ENCODE measurements at regions of chr4 and their contacts with region 1.

Region 1: DNA sequence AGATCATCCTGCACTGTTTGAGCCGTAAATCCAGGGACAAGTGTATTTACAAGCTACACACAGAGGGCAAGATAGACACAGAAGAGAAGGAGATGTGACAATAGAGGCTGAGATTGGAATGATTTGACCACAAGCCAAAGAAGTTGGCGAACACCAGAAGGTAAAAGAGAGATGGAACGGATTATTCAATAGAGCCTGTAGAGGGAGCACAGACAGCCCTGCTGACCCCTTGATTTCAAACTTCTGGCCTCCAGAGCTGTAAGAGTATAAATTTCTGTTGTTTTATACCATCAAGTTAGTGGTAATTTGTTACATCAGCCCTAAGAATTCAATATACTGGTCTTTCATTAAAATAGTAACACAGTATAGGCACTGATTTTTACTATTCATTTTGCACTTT is 447.8 kb downstream of the FAT4 start:
- DNase-seq: no peak
- H3K4me3 ChIP-seq: no peak overlapping the region
- H3K27ac ChIP-seq: no peak overlapping the region
- H3K4me1 ChIP-seq: no peaks in the 10 kb centered on the region
- H3K27me3 ChIP-seq: no peaks in the 10 kb centered on the region
- CTCF ChIP-seq: no peak
- EP300 ChIP-seq: no peak
- POLR2A ChIP-seq: no peak

Region 2: GRCh38 chr4:126827669-126828068 is 1065.1 kb after region 1 on chr4:
- in situ Hi-C with region 1: no loop called
- intact Hi-C with region 1: loop called (anchors 10 kb)
- DNase-seq: no peak
- H3K4me3 ChIP-seq: no peak overlapping the region
- H3K27ac ChIP-seq: no peak overlapping the region
- H3K4me1 ChIP-seq: no peaks in the 10 kb centered on the region
- H3K27me3 ChIP-seq: no peaks in the 10 kb centered on the region
- CTCF ChIP-seq: no peak
- EP300 ChIP-seq: no peak
- POLR2A ChIP-seq: no peak